ENCODE measurements at regions of chr5 and their contacts with region 1.

Region 1: DNA sequence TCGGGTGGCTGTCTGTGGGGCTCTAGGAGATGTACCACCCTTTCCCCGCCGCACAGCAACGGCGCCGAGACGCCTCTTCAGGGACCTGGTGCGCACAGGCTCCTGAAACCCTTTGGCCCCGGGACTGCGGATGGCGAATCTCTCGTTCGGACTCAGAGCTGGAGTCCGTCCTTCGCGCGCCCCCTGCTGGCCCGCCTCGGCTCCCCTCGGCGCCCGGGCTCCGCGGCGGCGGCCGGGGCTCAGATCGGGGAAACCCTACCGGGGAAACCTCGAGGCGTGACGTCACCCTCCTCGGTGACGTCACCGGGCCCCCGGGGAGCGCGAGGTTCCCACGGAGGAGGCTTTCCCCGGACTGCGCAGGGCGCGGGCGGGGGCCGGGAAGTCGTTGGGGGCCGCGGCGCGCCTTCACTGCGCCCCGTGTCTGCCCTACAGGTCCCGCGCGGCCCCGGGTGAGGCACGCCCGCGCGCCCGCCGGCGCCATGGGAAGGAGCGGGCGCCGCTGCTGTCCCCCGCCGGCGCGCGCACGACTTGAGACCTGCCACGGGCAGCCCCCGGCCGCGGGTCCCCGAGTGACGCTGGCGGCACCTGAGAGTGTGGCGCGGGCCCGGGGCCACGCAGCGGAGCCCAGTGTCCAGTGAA is 7.9 kb downstream of the PRR7 start:
- DNase-seq: peak; percentile 92
- H3K4me3 ChIP-seq: peak overlapping the region; percentile 6 to 38 (median 21)
- H3K27ac ChIP-seq: peak overlapping the region; percentile 77
- H3K4me1 ChIP-seq: peaks cover 28% of the 10 kb centered on the region
- H3K27me3 ChIP-seq: no peaks in the 10 kb centered on the region
- CTCF ChIP-seq: peak; percentile 83 to 99
- POLR2A ChIP-seq: peak; percentile 59

Region 2: GRCh38 chr5:177317959-177318377 is 136.5 kb before region 1 on chr5:
- CTCF ChIA-PET with region 1: interaction called, 6 read pairs
- POLR2A ChIA-PET with region 1: no interaction called
- dilution Hi-C with region 1: no loop called
- intact Hi-C with region 1: loop called (anchors 2 kb)
- DNase-seq: peak; percentile 82
- H3K4me3 ChIP-seq: no peak overlapping the region
- H3K27ac ChIP-seq: no peak overlapping the region
- H3K4me1 ChIP-seq: peaks cover under 1% of the 10 kb centered on the region
- H3K27me3 ChIP-seq: no peaks in the 10 kb centered on the region
- CTCF ChIP-seq: peak; percentile 83 to 93
- POLR2A ChIP-seq: no peak

Region 3: GRCh38 chr5:177403792-177404640 is 50.5 kb before region 1 on chr5:
- CTCF ChIA-PET with region 1: interaction called, 288 read pairs
- POLR2A ChIA-PET with region 1: interaction called, 7 read pairs
- dilution Hi-C with region 1: no loop called
- intact Hi-C with region 1: loop called (anchors 1 kb)
- DNase-seq: peak; percentile 73
- H3K4me3 ChIP-seq: peak overlapping the region; percentile 27 to 42 (median 34)
- H3K27ac ChIP-seq: no peak overlapping the region
- H3K4me1 ChIP-seq: peaks cover 23% of the 10 kb centered on the region
- H3K27me3 ChIP-seq: peaks cover 34 to 39% of the 10 kb centered on the region in 2 experiments
- CTCF ChIP-seq: peak; percentile 81 to 87
- POLR2A ChIP-seq: peak; percentile 41

Region 4: GRCh38 chr5:177425801-177426565 is 28.5 kb before region 1 on chr5:
- CTCF ChIA-PET with region 1: interaction called, 27 read pairs
- POLR2A ChIA-PET with region 1: interaction called, 4 read pairs
- dilution Hi-C with region 1: no loop called
- intact Hi-C with region 1: loop called (anchors 2 kb)
- DNase-seq: peak; percentile 100
- H3K4me3 ChIP-seq: peak overlapping the region; percentile 40 to 52 (median 51)
- H3K27ac ChIP-seq: peak overlapping the region; percentile 61
- H3K4me1 ChIP-seq: peaks cover 14% of the 10 kb centered on the region
- H3K27me3 ChIP-seq: no peaks in the 10 kb centered on the region
- CTCF ChIP-seq: no peak
- POLR2A ChIP-seq: peak; percentile 56

Region 5: GRCh38 chr5:177478711-177479646 is 24.5 kb after region 1 on chr5:
- CTCF ChIA-PET with region 1: interaction called, 17 read pairs
- POLR2A ChIA-PET with region 1: interaction called, 3 read pairs
- dilution Hi-C with region 1: no loop called
- intact Hi-C with region 1: no loop called
- DNase-seq: no peak
- H3K4me3 ChIP-seq: no peak overlapping the region
- H3K27ac ChIP-seq: no peak overlapping the region
- H3K4me1 ChIP-seq: no peaks in the 10 kb centered on the region
- H3K27me3 ChIP-seq: no peaks in the 10 kb centered on the region
- CTCF ChIP-seq: no peak
- POLR2A ChIP-seq: peak; percentile 52

Measured in endothelial cell of umbilical vein (primary cell).